Mammary epithelial cell (primary cell): ENCODE measurements at regions of chr4 and their contacts with region 1.

Region 1: DNA sequence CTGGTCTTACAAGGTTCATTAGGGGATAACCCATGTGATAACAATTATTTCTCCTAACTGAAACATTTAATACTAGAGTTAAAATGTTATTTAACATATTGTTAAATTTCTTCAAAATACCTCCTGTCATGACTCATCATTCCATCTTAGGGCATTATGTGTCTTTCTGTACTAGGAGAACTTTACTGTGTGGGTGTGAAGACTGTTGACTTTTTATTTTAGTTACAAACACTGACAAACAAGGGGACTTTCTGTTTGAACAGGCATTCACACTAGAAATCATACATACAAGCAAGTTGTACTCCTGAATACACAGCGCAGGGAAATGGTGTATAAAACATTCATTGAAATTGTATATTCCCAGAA is 175.9 kb downstream of the FBXW7 start:
- DNase-seq: no peak
- H3K4me3 ChIP-seq: no peak overlapping the region
- H3K27ac ChIP-seq: no peak overlapping the region
- H3K4me1 ChIP-seq: peaks cover 16% of the 10 kb centered on the region
- H3K27me3 ChIP-seq: no peaks in the 10 kb centered on the region
- CTCF ChIP-seq: no peak

Region 2: GRCh38 chr4:152342293-152342692 is 17.7 kb before region 1 on chr4:
- CTCF ChIA-PET with region 1: no interaction called
- dilution Hi-C with region 1: no loop called
- in situ Hi-C with region 1: no loop called
- intact Hi-C with region 1: loop called (anchors 1 kb)
- DNase-seq: peak; percentile 39
- H3K4me3 ChIP-seq: no peak overlapping the region
- H3K27ac ChIP-seq: no peak overlapping the region
- H3K4me1 ChIP-seq: peaks cover 17% of the 10 kb centered on the region
- H3K27me3 ChIP-seq: no peaks in the 10 kb centered on the region
- CTCF ChIP-seq: no peak